ENCODE measurements at regions of chr18 and their contacts with region 1.

Region 1: DNA sequence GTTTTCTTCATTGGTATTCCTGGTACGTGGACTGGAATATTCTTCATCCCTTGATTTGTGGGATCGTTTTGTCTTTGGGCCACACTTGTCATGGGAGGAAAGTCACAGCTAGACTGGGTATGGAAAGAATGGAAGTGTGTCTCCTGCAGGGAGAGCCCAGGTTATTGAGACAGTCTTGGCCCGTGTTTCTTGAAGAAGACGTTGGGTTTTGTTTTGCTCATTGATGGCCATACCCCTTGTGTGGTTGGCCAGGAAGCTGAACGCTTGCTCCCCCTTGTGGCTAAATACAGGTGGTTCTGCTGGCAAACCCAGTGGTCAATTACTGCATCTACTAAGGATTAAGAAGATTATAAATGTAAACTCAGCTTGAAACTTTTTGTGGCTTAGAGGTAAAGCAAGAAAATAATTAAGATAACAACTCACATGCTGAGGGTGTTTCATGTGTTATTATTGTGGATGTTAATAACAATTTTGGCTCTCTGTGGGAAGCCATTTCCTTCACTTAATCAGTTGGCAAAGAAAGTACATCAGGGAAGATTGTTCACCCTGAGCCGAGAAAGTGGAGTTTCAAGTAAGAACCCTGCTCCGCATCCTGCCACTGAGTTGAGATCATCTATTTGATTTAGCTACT is 91.8 kb downstream of the NEDD4L start:
- DNase-seq: peak; percentile 72
- ATAC-seq: peak; percentile 84
- H3K4me3 Mint-ChIP-seq: no peak overlapping the region
- H3K27ac Mint-ChIP-seq: no peak overlapping the region
- H3K4me1 Mint-ChIP-seq: peaks cover 7% of the 10 kb centered on the region
- H3K27me3 Mint-ChIP-seq: peaks cover 7% of the 10 kb centered on the region

Region 2: DNA sequence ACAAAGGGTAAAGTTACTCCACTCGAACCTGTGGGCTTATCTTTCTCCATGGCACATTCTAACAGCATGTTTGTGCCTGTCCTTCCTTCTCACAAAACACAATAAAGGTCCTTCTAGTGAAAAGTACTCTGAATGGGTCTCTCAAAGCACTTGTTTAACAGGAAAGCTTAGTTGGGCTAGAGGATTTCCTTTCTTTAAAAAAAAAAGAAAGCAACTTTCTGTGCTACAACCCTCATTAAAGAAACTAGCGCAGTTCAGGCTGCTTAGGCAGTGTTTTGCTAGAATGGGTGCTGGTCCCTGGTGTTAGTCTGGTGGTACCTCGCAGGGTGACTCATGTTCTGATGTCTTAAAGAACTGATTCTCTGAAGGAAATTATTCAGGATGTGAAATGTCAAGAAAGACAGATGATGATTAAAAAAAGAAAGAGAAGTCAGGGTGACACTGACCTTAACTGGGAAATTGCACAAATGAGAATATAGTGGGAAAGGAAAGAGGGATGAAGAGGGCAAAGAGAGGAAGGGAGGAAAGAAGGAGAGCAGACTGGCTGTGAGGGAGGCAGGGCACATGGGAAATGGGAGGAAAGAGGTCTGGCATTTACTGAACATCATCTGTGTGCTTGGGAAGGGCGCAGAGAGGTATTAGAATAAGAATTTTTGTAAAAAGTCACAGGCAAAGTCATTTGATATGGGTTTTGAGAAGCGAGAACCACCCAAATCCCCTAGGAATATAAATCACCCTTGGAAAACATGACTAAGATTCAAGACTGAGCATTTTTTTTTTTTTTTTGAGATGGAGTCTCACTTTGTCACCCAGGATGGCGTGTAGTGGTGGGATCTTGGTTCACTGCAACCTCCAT is 407.6 kb before region 1 on chr18:
- CTCF ChIA-PET with region 1: no interaction called
- POLR2A ChIA-PET with region 1: no interaction called
- intact Hi-C with region 1: no loop called
- DNase-seq: no peak
- ATAC-seq: peak; percentile 36
- H3K4me3 Mint-ChIP-seq: no peak overlapping the region
- H3K27ac Mint-ChIP-seq: no peak overlapping the region
- H3K4me1 Mint-ChIP-seq: no peaks in the 10 kb centered on the region
- H3K27me3 Mint-ChIP-seq: no peaks in the 10 kb centered on the region

Region 3: GRCh38 chr18:57881818-57882413 is 253.9 kb before region 1 on chr18:
- CTCF ChIA-PET with region 1: interaction called, 9 read pairs
- POLR2A ChIA-PET with region 1: no interaction called
- intact Hi-C with region 1: loop called (anchors 1 to 5 kb)
- DNase-seq: peak; percentile 74
- ATAC-seq: peak; percentile 90
- H3K4me3 Mint-ChIP-seq: no peak overlapping the region
- H3K27ac Mint-ChIP-seq: no peak overlapping the region
- H3K4me1 Mint-ChIP-seq: peaks cover 2% of the 10 kb centered on the region
- H3K27me3 Mint-ChIP-seq: peaks cover 13% of the 10 kb centered on the region

Region 4: GRCh38 chr18:58080451-58080850 is 55.4 kb before region 1 on chr18:
- CTCF ChIA-PET with region 1: no interaction called
- POLR2A ChIA-PET with region 1: no interaction called
- intact Hi-C with region 1: no loop called
- DNase-seq: no peak
- ATAC-seq: no peak
- H3K4me3 Mint-ChIP-seq: no peak overlapping the region
- H3K27ac Mint-ChIP-seq: no peak overlapping the region
- H3K4me1 Mint-ChIP-seq: no peaks in the 10 kb centered on the region
- H3K27me3 Mint-ChIP-seq: peaks cover 21% of the 10 kb centered on the region